Adrenal gland (tissue), 19 donors: ENCODE measurements at regions of chr16 and their contacts with region 1.

Region 1: GRCh38 chr16:19375561-19376158 is 42.0 kb upstream of the TMC5 start:
- DNase-seq: peak; percentile 19 to 75 (median 35)
- H3K4me3 ChIP-seq: no peak overlapping the region
- H3K27ac ChIP-seq: no peak overlapping the region
- H3K4me1 ChIP-seq: no peaks in the 10 kb centered on the region
- H3K27me3 ChIP-seq: no peaks in the 10 kb centered on the region
- CTCF ChIP-seq: peak; percentile 90 to 98 (median 94)
- POLR2A ChIP-seq: no peak

Region 2: GRCh38 chr16:19167710-19168370 is 207.8 kb before region 1 on chr16 and contains the start of gene SYT17:
- intact Hi-C with region 1: loop called (anchors 2 to 10 kb)
- DNase-seq: peak; percentile 56 to 77 (median 65)
- H3K4me3 ChIP-seq: peak within 1 kb of the TSS in 2 of 4 donors; percentile 26 to 57
- H3K27ac ChIP-seq: peak within 1 kb of the TSS in 1 of 5 donors; percentile 66
- H3K4me1 ChIP-seq: peaks cover 0 to 17% of the 10 kb centered on the region in 2 donors
- H3K27me3 ChIP-seq: peaks cover 9% of the 10 kb centered on the region
- CTCF ChIP-seq: peak; percentile 11 to 84 (median 60)
- POLR2A ChIP-seq: no peak
- total RNA-seq, gene SYT17: 1.1 to 6.5 (median 2.5) TPM

Region 3: GRCh38 chr16:19179546-19180490 is 195.8 kb before region 1 on chr16:
- intact Hi-C with region 1: loop called in 1 of 2 experiments (anchors 10 kb)
- DNase-seq: peak; percentile 33 to 80 (median 53)
- H3K4me3 ChIP-seq: no peak overlapping the region
- H3K27ac ChIP-seq: no peak overlapping the region
- H3K4me1 ChIP-seq: no peaks in the 10 kb centered on the region
- H3K27me3 ChIP-seq: no peaks in the 10 kb centered on the region
- CTCF ChIP-seq: peak; percentile 36 to 65 (median 62)
- POLR2A ChIP-seq: no peak

Region 4: GRCh38 chr16:19223235-19224170 is 152.2 kb before region 1 on chr16:
- intact Hi-C with region 1: loop called in 1 of 2 experiments (anchors 5 kb)
- DNase-seq: peak in 6 of 7 donors; percentile 33 to 66 (median 50)
- H3K4me3 ChIP-seq: no peak overlapping the region
- H3K27ac ChIP-seq: no peak overlapping the region
- H3K4me1 ChIP-seq: no peaks in the 10 kb centered on the region
- H3K27me3 ChIP-seq: no peaks in the 10 kb centered on the region
- CTCF ChIP-seq: peak; percentile 40 to 66 (median 60)
- POLR2A ChIP-seq: no peak